Mucosa of descending colon (tissue), 3 donors: ENCODE measurements at regions of chr4 and their contacts with region 1.

Region 1: DNA sequence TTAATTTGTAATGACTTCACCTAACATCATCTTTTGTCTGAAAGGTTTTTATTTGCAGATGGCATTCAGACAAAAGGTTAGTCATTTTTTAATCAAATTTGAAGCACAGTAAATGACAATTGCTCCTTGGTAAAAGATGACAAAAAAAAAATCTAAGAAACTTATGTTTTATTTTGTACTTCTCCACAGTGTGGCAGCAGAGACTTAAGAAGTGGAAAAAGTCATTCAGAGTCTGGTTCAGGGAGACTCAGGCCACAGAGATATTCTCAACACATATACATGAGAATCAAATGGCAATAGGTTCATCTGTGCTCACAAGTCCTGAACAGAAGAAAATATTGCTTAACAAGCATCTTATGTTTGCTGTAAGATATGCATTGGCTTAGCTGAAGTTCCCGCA is 436.2 kb downstream of the KCNIP4 start:
- DNase-seq: peak in 1 of 3 donors; percentile 3
- ATAC-seq: peak; percentile 31
- H3K4me3 ChIP-seq: no peak overlapping the region
- H3K4me1 ChIP-seq: no peaks in the 10 kb centered on the region
- CTCF ChIP-seq: no peak

Region 2: DNA sequence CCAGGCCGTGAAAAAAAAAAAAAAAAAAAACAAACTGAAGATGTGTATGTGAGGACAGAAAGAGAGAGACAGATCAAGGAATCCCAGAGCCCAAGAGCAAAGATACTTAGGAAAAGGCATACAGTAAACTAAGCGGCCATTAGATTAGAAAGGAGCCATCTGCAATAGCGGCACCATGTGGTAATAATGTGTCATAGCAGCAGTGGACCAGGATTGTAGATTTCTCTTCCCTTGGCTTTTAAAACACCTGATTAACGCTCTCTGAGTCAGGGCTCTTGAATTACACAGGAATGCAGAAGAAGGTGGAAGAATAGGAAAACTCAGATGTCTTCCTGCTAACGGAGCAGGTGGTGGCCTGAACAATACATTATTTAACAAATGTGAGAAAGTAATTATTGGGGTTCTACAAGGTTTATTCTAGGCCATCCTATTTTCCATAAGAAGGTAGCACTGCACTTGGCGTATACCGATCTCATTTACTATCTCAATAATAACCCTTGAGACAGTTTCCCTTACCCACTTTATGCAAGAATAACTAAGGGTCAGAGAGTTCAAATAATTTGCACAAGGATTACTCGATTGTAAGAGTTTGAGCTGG is 253.6 kb after region 1 on chr4:
- intact Hi-C with region 1: loop called (anchors 5 kb)
- DNase-seq: peak in 1 of 3 donors; percentile 60
- ATAC-seq: peak; percentile 81
- H3K4me3 ChIP-seq: no peak overlapping the region
- H3K4me1 ChIP-seq: no peaks in the 10 kb centered on the region
- CTCF ChIP-seq: peak; percentile 66